ENCODE measurements at regions of chr14 and their contacts with region 1.

Region 1: DNA sequence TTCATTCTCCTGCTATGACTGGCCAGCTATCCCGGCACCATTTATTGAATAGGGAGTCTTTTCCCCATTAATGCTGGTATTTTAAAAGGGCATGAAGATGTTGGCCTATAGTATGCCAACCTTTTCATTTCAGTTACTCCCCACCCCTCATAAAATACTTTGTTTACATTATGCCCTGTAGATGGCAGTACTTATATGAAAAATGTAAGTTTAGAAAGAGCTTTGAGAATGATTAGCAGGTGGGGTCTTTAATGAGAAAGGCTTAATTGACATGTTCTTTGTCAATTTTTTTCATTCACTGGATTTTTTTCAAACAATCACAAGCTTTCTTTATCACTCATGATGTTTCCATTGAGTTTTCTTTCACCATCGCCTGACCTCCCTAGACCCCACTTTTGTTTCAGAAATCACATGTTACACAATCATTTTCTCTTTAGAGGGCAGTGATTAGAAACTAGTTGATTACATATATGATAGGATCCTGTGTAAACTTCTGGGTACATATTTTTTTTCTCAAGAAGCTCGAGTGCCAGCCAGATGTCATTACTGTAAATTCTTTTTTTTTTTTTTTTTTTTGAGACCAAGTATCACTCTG is 62.6 kb upstream of the PSMA6 start:
- DNase-seq: peak in 2 of 5 donors; percentile 9 to 32
- H3K4me3 ChIP-seq: no peak overlapping the region
- H3K4me3 Mint-ChIP-seq: no peak overlapping the region
- H3K27ac ChIP-seq: no peak overlapping the region
- H3K27ac Mint-ChIP-seq: peak overlapping the region in 4 of 8 donors; percentile 21 to 66 (median 46)
- H3K4me1 ChIP-seq: peaks cover 13% of the 10 kb centered on the region
- H3K4me1 Mint-ChIP-seq: peaks cover 16 to 24% (median 22%) of the 10 kb centered on the region in 3 donors
- H3K27me3 ChIP-seq: no peaks in the 10 kb centered on the region
- H3K27me3 Mint-ChIP-seq: no peaks in the 10 kb centered on the region

Region 2: GRCh38 chr14:35140718-35141581 is 88.6 kb before region 1 on chr14:
- CTCF ChIA-PET with region 1: interaction called, 18 read pairs
- POLR2A ChIA-PET with region 1: no interaction called
- DNase-seq: peak in 2 of 5 donors; percentile 20 to 30
- H3K4me3 ChIP-seq: no peak overlapping the region
- H3K4me3 Mint-ChIP-seq: no peak overlapping the region
- H3K27ac ChIP-seq: no peak overlapping the region
- H3K27ac Mint-ChIP-seq: peak overlapping the region in 7 of 8 donors; percentile 41 to 87 (median 71)
- H3K4me1 ChIP-seq: peaks cover 3% of the 10 kb centered on the region
- H3K4me1 Mint-ChIP-seq: peaks cover 7 to 32% (median 19%) of the 10 kb centered on the region in 3 donors
- H3K27me3 ChIP-seq: no peaks in the 10 kb centered on the region
- H3K27me3 Mint-ChIP-seq: no peaks in the 10 kb centered on the region

Region 3: GRCh38 chr14:35285168-35286002 is 55.8 kb after region 1 on chr14:
- CTCF ChIA-PET with region 1: interaction called, 11 read pairs
- POLR2A ChIA-PET with region 1: no interaction called
- DNase-seq: no peak
- H3K4me3 ChIP-seq: peak overlapping the region; percentile 2
- H3K4me3 Mint-ChIP-seq: peak overlapping the region; percentile 16 to 71 (median 57)
- H3K27ac ChIP-seq: peak overlapping the region; percentile 25
- H3K27ac Mint-ChIP-seq: peak overlapping the region; percentile 89 to 97 (median 92)
- H3K4me1 ChIP-seq: peaks cover 35% of the 10 kb centered on the region
- H3K4me1 Mint-ChIP-seq: peaks cover 34 to 43% (median 40%) of the 10 kb centered on the region in 3 donors
- H3K27me3 ChIP-seq: no peaks in the 10 kb centered on the region
- H3K27me3 Mint-ChIP-seq: no peaks in the 10 kb centered on the region

Region 4: GRCh38 chr14:35416108-35416750 is 186.6 kb after region 1 on chr14:
- CTCF ChIA-PET with region 1: interaction called, 12 read pairs
- POLR2A ChIA-PET with region 1: no interaction called
- DNase-seq: peak; percentile 55 to 79 (median 68)
- H3K4me3 ChIP-seq: peak overlapping the region; percentile 32
- H3K4me3 Mint-ChIP-seq: peak overlapping the region; percentile 41 to 86 (median 80)
- H3K27ac ChIP-seq: no peak overlapping the region
- H3K27ac Mint-ChIP-seq: peak overlapping the region; percentile 86 to 99 (median 96)
- H3K4me1 ChIP-seq: peaks cover 34% of the 10 kb centered on the region
- H3K4me1 Mint-ChIP-seq: peaks cover 49 to 61% (median 58%) of the 10 kb centered on the region in 3 donors
- H3K27me3 ChIP-seq: no peaks in the 10 kb centered on the region
- H3K27me3 Mint-ChIP-seq: peaks cover 0 to 4% of the 10 kb centered on the region in 2 donors

Region 5: GRCh38 chr14:35423621-35424020 is 194.0 kb after region 1 on chr14:
- CTCF ChIA-PET with region 1: interaction called, 13 read pairs
- POLR2A ChIA-PET with region 1: no interaction called
- DNase-seq: no peak
- H3K4me3 ChIP-seq: no peak overlapping the region
- H3K4me3 Mint-ChIP-seq: no peak overlapping the region
- H3K27ac ChIP-seq: no peak overlapping the region
- H3K27ac Mint-ChIP-seq: no peak overlapping the region
- H3K4me1 ChIP-seq: peaks cover 7% of the 10 kb centered on the region
- H3K4me1 Mint-ChIP-seq: peaks cover 6 to 15% (median 12%) of the 10 kb centered on the region in 3 donors
- H3K27me3 ChIP-seq: no peaks in the 10 kb centered on the region
- H3K27me3 Mint-ChIP-seq: peaks cover 0 to 1% of the 10 kb centered on the region in 2 donors